Activated T-helper 1 cell treated with anti-CD3 and anti-CD28 coated beads, Interleukin-12 subunit alpha, Interleukin-12 subunit beta, Interleukin-2, Interleukin-4 antibody, amounts not matched to agents 30 ng/mL and 10 ng/mL and 1 ng/mL, durations not matched to agents 14 hours and 24 hours and 36 hours (primary cell): ENCODE measurements at regions of chr22 and their contacts with region 1.

Region 1: GRCh38 chr22:31230871-31231621 is 18.9 kb downstream of the LIMK2 start:
- DNase-seq: peak; percentile 25
- H3K4me3 Mint-ChIP-seq: peak overlapping the region; percentile 60
- H3K27ac Mint-ChIP-seq: peak overlapping the region; percentile 57
- H3K4me1 Mint-ChIP-seq: peaks cover 62% of the 10 kb centered on the region
- H3K27me3 Mint-ChIP-seq: no peaks in the 10 kb centered on the region

Region 2: DNA sequence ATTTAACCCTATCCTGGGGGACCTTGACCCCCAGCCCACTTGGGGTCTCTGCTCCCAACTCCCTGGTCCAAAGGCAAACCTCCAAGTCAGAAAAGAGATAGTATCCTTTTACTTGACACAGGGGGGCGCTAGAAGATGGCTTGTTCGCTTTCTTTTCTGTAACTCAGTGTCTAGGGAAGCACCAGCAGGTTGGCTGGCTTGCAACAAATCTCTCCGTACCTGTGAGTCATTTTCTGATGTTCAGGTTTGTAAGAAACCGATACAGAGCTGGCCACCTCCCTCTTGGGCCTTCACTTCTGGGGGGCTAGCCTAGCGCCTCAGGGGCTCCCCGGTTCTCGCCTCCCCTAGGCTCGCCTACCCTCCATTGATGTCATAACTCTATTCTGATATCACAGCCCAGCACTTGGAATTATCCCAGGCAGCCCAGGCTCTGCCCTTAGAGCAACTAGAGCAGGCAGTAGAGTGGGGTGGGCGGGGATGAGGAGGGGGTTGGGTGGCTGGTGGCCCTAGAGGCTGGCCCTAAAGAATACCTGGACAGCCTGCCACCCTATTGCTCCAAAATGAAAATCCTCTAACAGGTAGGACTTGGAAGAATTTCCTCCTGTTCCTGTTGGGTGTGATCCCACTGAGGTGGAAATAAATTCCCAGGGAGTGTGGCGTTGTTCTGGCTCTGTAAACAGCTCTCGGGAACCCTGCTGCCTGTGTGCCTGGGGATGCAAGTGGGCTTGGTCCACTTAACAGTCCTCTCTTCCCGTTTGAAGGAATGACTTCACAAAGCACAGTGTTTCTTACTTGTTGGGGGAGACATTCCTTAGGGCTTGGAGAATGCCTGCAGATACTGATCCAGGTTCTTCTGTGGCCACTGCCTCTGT is 467.0 kb before region 1 on chr22:
- intact Hi-C with region 1: loop called (anchors 5 kb)
- DNase-seq: peak; percentile 40
- H3K4me3 Mint-ChIP-seq: no peak overlapping the region
- H3K27ac Mint-ChIP-seq: no peak overlapping the region
- H3K4me1 Mint-ChIP-seq: peaks cover 4% of the 10 kb centered on the region
- H3K27me3 Mint-ChIP-seq: peaks cover 3% of the 10 kb centered on the region

Region 3: GRCh38 chr22:30947816-30948454 is 283.1 kb before region 1 on chr22:
- intact Hi-C with region 1: loop called (anchors 5 kb)
- DNase-seq: no peak
- H3K4me3 Mint-ChIP-seq: no peak overlapping the region
- H3K27ac Mint-ChIP-seq: no peak overlapping the region
- H3K4me1 Mint-ChIP-seq: peaks cover 39% of the 10 kb centered on the region
- H3K27me3 Mint-ChIP-seq: no peaks in the 10 kb centered on the region

Region 4: DNA sequence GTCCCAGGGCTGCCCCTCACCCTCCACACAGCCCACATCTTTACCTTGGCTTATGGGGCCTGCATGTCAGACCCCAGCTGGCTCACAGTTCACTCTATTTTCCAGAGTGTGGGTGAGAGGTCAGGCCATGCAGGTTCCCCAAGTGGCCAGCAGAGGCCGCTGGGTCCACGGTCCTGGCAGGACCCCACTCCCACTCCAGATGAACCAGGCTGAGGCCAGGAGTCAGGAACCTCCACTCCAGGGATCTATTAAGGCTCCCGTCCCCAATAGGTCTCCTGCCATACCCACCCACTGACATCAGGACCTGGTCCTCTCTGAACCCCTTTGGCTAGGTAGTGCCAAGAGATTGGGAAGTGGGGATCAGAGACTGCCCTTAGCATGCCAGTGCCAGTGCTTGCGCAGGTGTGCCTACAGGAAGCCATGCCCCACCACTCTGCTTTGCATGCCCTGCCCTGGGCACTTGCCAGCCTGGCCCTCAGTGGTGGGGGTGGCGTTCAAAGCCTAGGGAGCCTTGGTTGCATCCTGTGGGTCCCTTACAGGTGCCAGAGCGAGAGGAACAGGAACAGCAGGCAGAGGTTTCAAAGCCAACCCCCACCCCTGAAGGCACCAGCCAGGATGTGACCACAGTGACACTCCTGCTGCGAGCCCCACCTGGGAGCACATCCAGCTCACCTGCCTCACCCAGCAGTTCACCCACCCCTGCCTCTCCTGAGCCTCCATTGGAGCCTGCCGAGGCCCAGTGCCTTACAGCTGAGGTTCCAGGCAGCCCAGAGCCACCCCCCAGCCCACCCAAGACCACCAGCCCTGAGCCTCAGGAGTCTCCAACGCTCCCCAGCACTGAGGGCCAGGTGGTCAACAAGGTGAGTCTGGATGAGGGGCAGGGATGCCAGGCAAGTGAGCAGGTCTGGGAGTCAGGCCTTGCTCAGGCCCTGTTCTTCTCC is 141.6 kb before region 1 on chr22:
- intact Hi-C with region 1: loop called (anchors 1 kb)
- DNase-seq: no peak
- H3K4me3 Mint-ChIP-seq: no peak overlapping the region
- H3K27ac Mint-ChIP-seq: no peak overlapping the region
- H3K4me1 Mint-ChIP-seq: peaks cover under 1% of the 10 kb centered on the region
- H3K27me3 Mint-ChIP-seq: no peaks in the 10 kb centered on the region

Region 5: GRCh38 chr22:31160328-31160978 is 70.6 kb before region 1 on chr22:
- intact Hi-C with region 1: loop called (anchors 5 kb)
- DNase-seq: peak; percentile 9
- H3K4me3 Mint-ChIP-seq: peak overlapping the region; percentile 100
- H3K27ac Mint-ChIP-seq: peak overlapping the region; percentile 95
- H3K4me1 Mint-ChIP-seq: peaks cover 42% of the 10 kb centered on the region
- H3K27me3 Mint-ChIP-seq: peaks cover 15% of the 10 kb centered on the region